ENCODE measurements at regions of chr11 and their contacts with region 1.

Region 1: DNA sequence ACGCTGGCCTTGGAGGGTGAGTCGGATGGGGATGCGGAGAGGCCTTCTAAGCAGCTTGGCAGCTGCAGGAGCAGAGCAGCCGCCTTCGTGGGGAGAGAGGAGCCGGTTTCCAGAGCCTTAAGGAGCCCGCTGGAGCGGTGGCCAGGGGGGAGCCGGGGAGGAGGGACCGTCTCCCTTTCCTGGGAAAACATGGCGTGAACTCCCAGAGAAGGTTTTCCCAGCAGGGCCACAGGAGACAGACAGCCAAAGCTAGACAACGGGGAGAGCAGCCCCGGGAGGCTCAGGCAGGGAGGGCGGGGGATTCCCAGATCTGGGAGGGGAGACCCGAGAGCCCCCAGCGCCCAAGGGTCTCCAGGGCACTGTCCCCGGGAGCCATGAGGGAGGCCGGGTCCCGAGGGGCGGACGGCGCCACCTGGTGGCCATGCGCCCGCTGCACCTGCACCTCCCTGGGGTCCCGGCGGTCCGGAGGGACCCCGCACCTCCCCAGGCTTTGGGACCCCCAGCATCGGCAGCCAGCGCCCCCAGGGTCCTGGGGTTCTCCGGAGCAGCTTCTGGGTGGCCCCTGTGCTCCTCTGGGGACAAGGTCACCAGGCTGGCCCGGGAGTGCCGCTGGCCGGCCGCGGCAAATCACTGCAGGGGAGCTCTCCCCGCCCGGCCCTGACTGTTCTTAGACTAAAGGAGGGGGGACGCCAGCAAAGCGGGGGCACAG is 2.4 kb upstream of the SYT8 start:
- DNase-seq: no peak
- H3K4me3 ChIP-seq: peak overlapping the region in 1 of 3 experiments; percentile 33
- H3K27ac ChIP-seq: peak overlapping the region; percentile 24
- H3K4me1 ChIP-seq: peaks cover 100% of the 10 kb centered on the region
- H3K27me3 ChIP-seq: no peaks in the 10 kb centered on the region
- CTCF ChIP-seq: peak; percentile 64 to 98

Region 2: DNA sequence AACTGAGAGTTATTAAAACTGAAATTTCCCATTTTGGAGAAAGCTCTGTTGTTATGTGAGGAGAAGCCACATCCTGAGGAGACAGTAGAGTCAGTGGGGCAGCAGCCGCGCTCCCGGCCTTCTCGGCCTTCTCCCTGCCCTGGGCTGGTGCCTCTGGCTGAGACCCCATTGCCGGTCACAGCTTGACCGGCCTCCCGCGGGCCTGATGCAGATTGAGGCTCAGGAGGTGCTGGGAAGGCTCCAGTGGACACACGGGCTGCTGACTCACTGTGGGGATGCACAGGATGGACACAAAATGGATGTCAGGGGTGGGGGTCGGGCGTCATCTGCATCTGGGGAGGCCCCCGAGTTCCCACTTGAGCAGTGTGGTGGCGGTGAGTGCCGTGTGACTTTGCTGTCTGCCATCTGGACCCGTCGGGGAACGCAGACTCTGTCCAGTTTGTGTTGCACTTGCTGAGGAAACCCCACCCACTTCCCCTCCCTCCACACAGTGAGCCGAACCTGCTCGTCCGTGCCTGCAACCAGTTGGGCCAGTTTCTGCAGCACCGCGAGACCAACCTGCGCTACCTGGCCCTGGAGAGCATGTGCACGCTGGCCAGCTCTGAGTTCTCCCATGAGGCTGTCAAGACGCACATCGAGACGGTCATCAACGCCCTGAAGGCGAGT is 845.9 kb before region 1 on chr11:
- CTCF ChIA-PET with region 1: no interaction called
- dilution Hi-C with region 1: no loop called
- in situ Hi-C with region 1: no loop called
- intact Hi-C with region 1: no loop called
- DNase-seq: no peak
- H3K4me3 ChIP-seq: no peak overlapping the region
- H3K27ac ChIP-seq: no peak overlapping the region
- H3K4me1 ChIP-seq: no peaks in the 10 kb centered on the region
- H3K27me3 ChIP-seq: no peaks in the 10 kb centered on the region
- CTCF ChIP-seq: no peak

Region 3: DNA sequence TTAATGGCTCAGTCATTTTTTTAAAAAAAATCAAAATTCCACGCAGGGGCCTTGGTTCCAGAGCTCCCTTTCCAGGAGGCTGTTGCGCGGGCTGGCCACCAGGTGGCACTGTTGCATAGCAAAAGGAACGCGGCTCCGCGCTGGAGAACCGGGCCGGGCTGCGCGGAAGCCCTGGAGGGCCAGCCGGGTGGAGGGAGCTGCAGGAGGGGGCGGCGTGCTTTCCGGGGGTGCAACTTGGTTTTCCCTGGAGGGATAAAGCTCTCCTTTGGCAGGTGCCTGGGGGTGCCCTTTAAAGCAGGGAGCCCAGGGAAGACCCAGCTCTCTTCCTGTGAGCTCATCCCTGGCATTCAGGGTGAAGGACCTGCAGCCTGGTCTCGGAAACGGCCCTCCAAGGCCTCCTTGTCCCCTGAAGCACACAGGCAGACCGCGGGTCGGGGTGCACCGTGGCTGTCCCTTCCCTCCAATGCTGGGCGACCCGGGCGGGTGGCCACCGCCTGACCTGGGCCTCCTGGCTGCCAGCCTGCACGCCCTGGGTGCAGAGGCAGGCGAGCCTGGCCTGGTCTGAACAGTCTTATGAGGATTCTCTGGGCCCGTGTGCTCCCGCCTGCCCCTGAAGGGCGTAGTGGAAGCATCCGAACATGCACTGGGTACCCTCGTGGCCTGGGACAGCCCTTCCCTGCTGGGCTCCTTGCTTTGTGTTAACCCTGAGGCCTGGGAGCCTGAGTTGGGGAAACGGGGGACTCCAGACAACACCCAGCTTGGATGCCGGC is 179.4 kb before region 1 on chr11:
- CTCF ChIA-PET with region 1: interaction called, 19 read pairs
- dilution Hi-C with region 1: no loop called
- in situ Hi-C with region 1: no loop called
- intact Hi-C with region 1: loop called (anchors 1 kb)
- DNase-seq: peak; percentile 20
- H3K4me3 ChIP-seq: no peak overlapping the region
- H3K27ac ChIP-seq: no peak overlapping the region
- H3K4me1 ChIP-seq: peaks cover 23% of the 10 kb centered on the region
- H3K27me3 ChIP-seq: no peaks in the 10 kb centered on the region
- CTCF ChIP-seq: peak; percentile 79 to 93

Region 4: DNA sequence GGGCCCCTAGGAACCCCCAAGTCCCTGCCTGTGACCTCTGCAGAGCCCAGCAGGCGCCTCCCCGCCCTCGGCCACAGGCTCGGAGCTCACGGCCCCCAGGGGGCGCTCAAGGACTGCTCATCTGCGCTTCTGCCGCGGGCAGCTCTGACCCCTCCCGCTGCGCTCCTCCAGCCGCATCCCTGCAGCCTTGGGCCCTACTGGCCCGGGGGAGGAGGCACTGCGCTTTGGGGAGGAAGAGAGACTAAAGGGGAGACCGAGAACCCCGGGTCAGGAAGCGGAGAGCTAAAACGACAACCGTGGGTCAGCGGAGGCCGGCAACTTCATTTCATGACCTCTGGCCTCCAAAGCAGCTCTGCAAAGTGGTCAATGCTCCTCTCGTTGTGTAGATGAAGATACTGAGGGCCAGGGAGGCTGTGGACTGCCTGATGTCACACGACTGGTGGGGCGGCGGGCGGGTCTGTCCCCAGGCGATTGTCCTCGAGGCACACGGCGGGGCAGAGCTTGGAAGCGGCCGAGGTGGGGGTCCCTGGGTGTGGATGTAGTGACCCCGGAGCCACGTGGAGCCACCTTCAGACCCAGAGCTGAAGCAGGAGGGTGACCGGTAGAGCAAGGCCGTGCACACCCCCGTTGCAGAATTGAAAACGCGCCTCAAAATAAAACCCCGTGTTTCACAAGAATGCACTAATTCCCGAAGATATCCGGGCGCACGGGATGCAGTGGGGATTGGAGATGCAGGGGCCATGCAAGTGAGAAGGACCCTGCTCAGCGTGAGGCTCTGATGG is 138.1 kb before region 1 on chr11:
- CTCF ChIA-PET with region 1: interaction called, 38 read pairs
- dilution Hi-C with region 1: no loop called
- in situ Hi-C with region 1: loop called in 1 of 2 experiments (anchors 5 kb)
- intact Hi-C with region 1: loop called (anchors 1 kb)
- DNase-seq: peak; percentile 58
- H3K4me3 ChIP-seq: peak overlapping the region in 2 of 3 experiments; percentile 49 to 54
- H3K27ac ChIP-seq: no peak overlapping the region
- H3K4me1 ChIP-seq: peaks cover 14% of the 10 kb centered on the region
- H3K27me3 ChIP-seq: peaks cover 8% of the 10 kb centered on the region
- CTCF ChIP-seq: peak; percentile 72 to 92

Region 5: GRCh38 chr11:1706634-1707400 is 125.5 kb before region 1 on chr11:
- CTCF ChIA-PET with region 1: interaction called, 13 read pairs
- dilution Hi-C with region 1: no loop called
- in situ Hi-C with region 1: no loop called
- intact Hi-C with region 1: no loop called
- DNase-seq: no peak
- H3K4me3 ChIP-seq: no peak overlapping the region
- H3K27ac ChIP-seq: no peak overlapping the region
- H3K4me1 ChIP-seq: peaks cover 3% of the 10 kb centered on the region
- H3K27me3 ChIP-seq: peaks cover 2% of the 10 kb centered on the region
- CTCF ChIP-seq: peak in 1 of 2 donors; percentile 22

Region 6: DNA sequence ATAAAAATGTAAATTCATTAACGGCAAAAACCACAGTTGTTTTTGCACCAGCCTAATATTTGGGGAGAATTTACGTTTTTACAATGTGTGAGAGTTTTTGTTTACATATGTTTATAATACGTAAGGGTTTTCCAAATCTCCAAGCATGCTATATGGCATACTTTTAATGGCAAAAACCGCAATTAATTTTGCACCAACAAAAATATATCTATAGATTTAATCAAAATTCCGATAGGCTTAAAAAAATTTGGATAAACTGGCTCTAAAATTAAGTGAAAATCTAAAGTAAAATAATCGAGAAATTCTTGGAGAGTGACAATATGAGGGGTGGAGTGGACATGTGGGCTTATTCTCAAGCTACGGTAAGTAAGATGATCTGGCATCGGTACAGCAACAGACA is 112.6 kb before region 1 on chr11:
- CTCF ChIA-PET with region 1: no interaction called
- dilution Hi-C with region 1: no loop called
- in situ Hi-C with region 1: no loop called
- intact Hi-C with region 1: no loop called
- DNase-seq: no peak
- H3K4me3 ChIP-seq: no peak overlapping the region
- H3K27ac ChIP-seq: no peak overlapping the region
- H3K4me1 ChIP-seq: no peaks in the 10 kb centered on the region
- H3K27me3 ChIP-seq: no peaks in the 10 kb centered on the region
- CTCF ChIP-seq: no peak

Region 7: DNA sequence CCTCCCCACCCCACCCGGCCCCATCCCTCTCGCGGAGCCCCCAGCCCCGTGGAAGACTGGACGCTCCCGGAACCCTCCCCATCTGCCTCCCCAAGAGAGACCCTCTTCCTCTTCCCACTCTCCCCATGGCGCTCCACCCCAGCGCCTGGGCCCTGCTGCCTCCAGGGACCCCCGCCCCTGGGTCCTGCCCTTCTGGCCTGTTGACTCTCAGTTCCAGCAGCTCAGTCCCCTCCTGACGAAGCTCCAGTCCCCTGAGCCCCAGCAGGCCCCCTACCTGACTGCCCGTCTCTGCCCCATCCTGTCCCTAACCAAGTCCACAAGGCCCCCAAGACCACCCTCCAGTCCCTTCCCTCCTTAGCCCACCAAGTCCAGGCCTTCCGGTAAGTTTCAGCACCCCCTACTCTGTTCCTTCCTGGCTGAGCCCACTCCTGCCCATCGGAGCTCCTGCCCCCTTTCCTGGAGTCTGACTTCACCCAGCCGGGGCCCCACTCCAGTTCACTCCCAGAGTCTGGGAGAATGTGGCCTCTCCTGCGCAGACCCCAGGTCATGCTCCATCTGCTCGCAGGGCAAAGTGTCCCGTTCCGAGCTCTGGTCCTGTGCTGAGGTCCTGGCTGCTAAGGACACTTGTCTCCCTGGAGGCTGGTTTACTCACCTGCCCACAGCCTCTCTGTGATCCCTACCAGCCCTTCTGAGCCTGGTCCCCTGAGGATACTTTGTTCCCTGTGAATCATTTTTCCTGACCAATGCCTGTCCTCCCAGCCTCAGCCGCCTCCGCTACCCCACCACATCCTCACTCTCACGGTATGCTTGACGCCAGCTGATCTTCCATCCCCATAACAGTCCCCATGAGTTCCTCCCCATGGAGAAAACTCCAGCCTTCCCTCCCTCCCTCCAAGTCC is 82.7 kb before region 1 on chr11:
- CTCF ChIA-PET with region 1: interaction called, 3 read pairs
- dilution Hi-C with region 1: no loop called
- in situ Hi-C with region 1: loop called in 1 of 2 experiments (anchors 10 kb)
- intact Hi-C with region 1: loop called (anchors 1 kb)
- DNase-seq: peak; percentile 92
- H3K4me3 ChIP-seq: peak overlapping the region; percentile 52 to 74 (median 67)
- H3K27ac ChIP-seq: peak overlapping the region; percentile 54
- H3K4me1 ChIP-seq: peaks cover 59% of the 10 kb centered on the region
- H3K27me3 ChIP-seq: no peaks in the 10 kb centered on the region
- CTCF ChIP-seq: no peak

Region 8: GRCh38 chr11:1763796-1764661 is 68.3 kb before region 1 on chr11 and contains the start of gene CTSD:
- CTCF ChIA-PET with region 1: interaction called, 13 read pairs
- dilution Hi-C with region 1: no loop called
- in situ Hi-C with region 1: no loop called
- intact Hi-C with region 1: loop called (anchors 1 kb)
- DNase-seq: peak; percentile 66
- H3K4me3 ChIP-seq: peak within 1 kb of the TSS; percentile 58 to 93 (median 83)
- H3K27ac ChIP-seq: peak within 1 kb of the TSS; percentile 32
- H3K4me1 ChIP-seq: peaks cover 41% of the 10 kb centered on the region
- H3K27me3 ChIP-seq: no peaks in the 10 kb centered on the region
- CTCF ChIP-seq: no peak
- total RNA-seq, gene CTSD: 550 to 659 TPM

Region 9: DNA sequence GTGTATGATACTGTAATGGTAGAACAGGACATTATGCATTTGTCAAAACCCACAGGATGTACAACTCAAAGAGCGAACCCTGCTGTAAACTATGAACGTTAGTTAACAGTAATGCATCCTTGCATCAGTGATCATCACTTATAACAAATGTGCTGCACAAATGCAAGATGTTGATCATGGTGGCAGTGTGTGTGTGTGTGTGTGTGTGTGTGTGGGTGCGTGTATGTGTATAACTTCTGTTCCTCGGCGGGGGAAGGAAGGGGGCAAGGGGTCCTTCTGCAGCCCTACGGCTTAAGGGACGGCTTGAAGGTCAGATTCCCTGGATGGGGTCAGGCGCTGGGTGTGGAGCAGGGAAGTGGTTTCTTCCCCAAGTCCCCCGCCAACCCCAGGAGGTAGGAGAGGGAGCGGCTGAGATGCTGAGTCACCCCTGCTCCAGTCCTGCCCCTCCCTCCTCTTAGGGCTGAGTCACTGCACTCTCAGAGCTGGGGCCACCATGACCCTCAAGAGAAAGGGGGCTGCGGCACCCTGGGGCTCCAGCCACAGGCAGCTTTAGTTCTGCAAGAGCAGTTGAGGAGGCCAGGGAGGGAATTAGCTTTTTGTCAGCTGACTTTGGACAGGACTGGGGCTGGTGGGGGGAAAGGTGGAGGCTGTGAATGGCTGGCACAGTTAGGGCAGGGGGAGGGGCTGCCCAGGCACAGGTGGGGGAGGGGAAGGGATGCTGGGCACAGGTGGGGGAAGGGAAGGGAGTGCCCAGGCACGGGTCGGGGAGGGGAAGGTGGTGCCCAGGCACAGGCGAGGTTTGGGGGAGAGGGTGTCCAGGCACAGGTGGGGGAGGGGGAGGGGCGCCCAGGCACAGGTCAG is 59.9 kb before region 1 on chr11:
- CTCF ChIA-PET with region 1: no interaction called
- dilution Hi-C with region 1: no loop called
- in situ Hi-C with region 1: no loop called
- intact Hi-C with region 1: loop called (anchors 1 kb)
- DNase-seq: peak; percentile 85
- H3K4me3 ChIP-seq: no peak overlapping the region
- H3K27ac ChIP-seq: peak overlapping the region; percentile 56
- H3K4me1 ChIP-seq: peaks cover 30% of the 10 kb centered on the region
- H3K27me3 ChIP-seq: no peaks in the 10 kb centered on the region
- CTCF ChIP-seq: no peak